Transverse colon (tissue), 4 donors: ENCODE measurements at regions of chr2 and their contacts with region 1.

Region 1: DNA sequence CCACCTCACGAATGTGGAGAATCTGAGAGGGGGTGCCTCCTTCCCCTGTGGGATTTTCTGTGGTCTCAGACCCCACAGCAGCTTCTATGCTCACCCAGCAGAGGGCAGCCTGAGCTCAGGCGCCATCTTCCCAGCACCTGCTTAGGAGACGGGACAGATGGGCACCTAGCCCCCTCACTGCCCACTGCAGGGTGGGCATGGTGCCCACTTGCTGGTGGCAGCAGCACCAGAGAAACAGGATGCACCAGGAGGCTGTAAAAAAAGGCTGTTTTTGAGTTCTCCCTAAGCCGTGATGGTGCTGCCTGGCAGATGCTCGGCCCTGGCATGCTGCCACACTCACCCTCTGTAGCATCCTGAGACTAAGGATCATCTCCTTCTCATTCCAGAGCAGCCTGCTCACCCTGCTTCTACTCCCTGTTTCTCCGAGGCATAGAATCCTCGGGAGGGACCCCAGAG is 19.1 kb upstream of the SLC20A1 start:
- DNase-seq: peak; percentile 60
- H3K4me3 ChIP-seq: no peak overlapping the region
- H3K27ac ChIP-seq: peak overlapping the region; percentile 37 to 73 (median 56)
- H3K4me1 ChIP-seq: peaks cover 5 to 31% (median 11%) of the 10 kb centered on the region in 4 donors
- H3K27me3 ChIP-seq: peaks cover 3% of the 10 kb centered on the region
- CTCF ChIP-seq: peak; percentile 74 to 82 (median 79)
- EP300 ChIP-seq: no peak
- POLR2A ChIP-seq: no peak

Region 2: GRCh38 chr2:112666764-112667122 is 40.1 kb after region 1 on chr2:
- in situ Hi-C with region 1: no loop called
- intact Hi-C with region 1: no loop called
- DNase-seq: no peak
- H3K4me3 ChIP-seq: no peak overlapping the region
- H3K27ac ChIP-seq: no peak overlapping the region
- H3K4me1 ChIP-seq: peaks cover 0 to 2% (median 0%) of the 10 kb centered on the region in 4 donors
- H3K27me3 ChIP-seq: no peaks in the 10 kb centered on the region
- CTCF ChIP-seq: no peak
- EP300 ChIP-seq: no peak
- POLR2A ChIP-seq: no peak

Region 3: GRCh38 chr2:112692496-112692911 is 65.9 kb after region 1 on chr2:
- in situ Hi-C with region 1: loop called in 1 of 4 experiments (anchors 10 kb)
- intact Hi-C with region 1: no loop called
- DNase-seq: peak; percentile 80
- H3K4me3 ChIP-seq: no peak overlapping the region
- H3K27ac ChIP-seq: peak overlapping the region in 3 of 4 donors; percentile 6 to 49 (median 14)
- H3K4me1 ChIP-seq: peaks cover 0 to 35% (median 8%) of the 10 kb centered on the region in 4 donors
- H3K27me3 ChIP-seq: no peaks in the 10 kb centered on the region
- CTCF ChIP-seq: no peak
- EP300 ChIP-seq: no peak
- POLR2A ChIP-seq: no peak

Region 4: GRCh38 chr2:112726497-112727190 is 100.0 kb after region 1 on chr2:
- in situ Hi-C with region 1: loop called (anchors 5 to 25 kb)
- intact Hi-C with region 1: loop called (anchors 2 kb)
- DNase-seq: peak; percentile 92
- H3K4me3 ChIP-seq: no peak overlapping the region
- H3K27ac ChIP-seq: no peak overlapping the region
- H3K4me1 ChIP-seq: peaks cover 0 to 3% (median 3%) of the 10 kb centered on the region in 4 donors
- H3K27me3 ChIP-seq: no peaks in the 10 kb centered on the region
- CTCF ChIP-seq: peak; percentile 94 to 97 (median 96)
- EP300 ChIP-seq: no peak
- POLR2A ChIP-seq: no peak

Region 5: DNA sequence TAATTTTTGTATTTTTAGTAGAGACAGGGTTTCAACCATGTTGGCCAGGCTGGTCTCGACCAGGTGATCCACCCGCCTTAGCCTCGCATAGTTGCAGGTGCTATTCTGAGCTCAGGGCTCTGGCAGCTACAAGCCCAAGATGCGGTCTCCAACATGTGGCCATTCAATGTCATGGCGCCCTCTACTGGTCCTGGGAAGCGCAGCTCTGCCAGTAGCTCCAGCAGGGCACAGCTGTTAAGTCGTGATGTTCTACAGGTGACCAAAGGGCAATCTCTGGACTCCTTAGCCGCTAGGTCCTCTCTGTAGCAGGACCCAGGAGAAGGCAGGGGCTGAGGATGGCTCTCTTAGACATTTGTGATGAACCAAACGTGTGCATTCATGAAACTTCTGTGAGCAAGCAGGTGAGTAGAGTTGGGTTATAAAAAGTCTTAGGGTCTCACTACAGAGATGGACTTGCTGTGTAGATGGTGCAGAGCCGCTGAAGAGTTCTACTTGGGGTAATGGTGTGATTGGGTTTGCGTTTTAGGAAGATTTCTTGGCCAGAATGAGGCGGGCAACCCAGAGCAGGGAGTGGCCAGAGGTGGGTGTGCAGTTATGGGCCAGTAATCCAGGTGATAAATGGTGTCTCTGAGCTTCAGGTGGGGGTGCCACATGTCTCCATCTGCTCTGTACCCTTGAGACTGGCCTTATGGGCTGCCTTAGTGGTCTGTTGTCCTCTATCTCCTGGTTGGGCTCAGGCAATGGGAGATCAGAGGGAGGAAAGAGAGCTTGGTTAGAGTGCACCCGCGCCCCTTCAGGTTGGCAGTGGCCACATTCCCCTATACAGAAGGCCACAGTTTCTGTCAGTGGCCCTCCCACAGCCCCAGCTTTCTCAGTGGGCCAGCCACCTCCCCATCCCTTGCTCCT is 315.4 kb after region 1 on chr2:
- in situ Hi-C with region 1: loop called in 1 of 4 experiments (anchors 25 kb)
- intact Hi-C with region 1: no loop called
- DNase-seq: peak; percentile 85
- H3K4me3 ChIP-seq: no peak overlapping the region
- H3K27ac ChIP-seq: no peak overlapping the region
- H3K4me1 ChIP-seq: peaks cover 0 to 13% (median 7%) of the 10 kb centered on the region in 4 donors
- H3K27me3 ChIP-seq: no peaks in the 10 kb centered on the region
- CTCF ChIP-seq: peak; percentile 70 to 84 (median 82)
- EP300 ChIP-seq: no peak
- POLR2A ChIP-seq: no peak

Region 6: GRCh38 chr2:112958428-112959108 is 331.9 kb after region 1 on chr2:
- in situ Hi-C with region 1: loop called in 1 of 4 experiments (anchors 25 kb)
- intact Hi-C with region 1: no loop called
- DNase-seq: no peak
- H3K4me3 ChIP-seq: no peak overlapping the region
- H3K27ac ChIP-seq: no peak overlapping the region
- H3K4me1 ChIP-seq: no peaks in the 10 kb centered on the region
- H3K27me3 ChIP-seq: no peaks in the 10 kb centered on the region
- CTCF ChIP-seq: peak; percentile 58 to 80 (median 68)
- EP300 ChIP-seq: no peak
- POLR2A ChIP-seq: no peak